Right ventricle myocardium superior (tissue), 1 donor: ENCODE measurements at regions of chr12 and their contacts with region 1.

Region 1: GRCh38 chr12:112031472-112031871 is 18.2 kb downstream of the ERP29 start:
- DNase-seq: no peak
- ATAC-seq: no peak

Region 2: DNA sequence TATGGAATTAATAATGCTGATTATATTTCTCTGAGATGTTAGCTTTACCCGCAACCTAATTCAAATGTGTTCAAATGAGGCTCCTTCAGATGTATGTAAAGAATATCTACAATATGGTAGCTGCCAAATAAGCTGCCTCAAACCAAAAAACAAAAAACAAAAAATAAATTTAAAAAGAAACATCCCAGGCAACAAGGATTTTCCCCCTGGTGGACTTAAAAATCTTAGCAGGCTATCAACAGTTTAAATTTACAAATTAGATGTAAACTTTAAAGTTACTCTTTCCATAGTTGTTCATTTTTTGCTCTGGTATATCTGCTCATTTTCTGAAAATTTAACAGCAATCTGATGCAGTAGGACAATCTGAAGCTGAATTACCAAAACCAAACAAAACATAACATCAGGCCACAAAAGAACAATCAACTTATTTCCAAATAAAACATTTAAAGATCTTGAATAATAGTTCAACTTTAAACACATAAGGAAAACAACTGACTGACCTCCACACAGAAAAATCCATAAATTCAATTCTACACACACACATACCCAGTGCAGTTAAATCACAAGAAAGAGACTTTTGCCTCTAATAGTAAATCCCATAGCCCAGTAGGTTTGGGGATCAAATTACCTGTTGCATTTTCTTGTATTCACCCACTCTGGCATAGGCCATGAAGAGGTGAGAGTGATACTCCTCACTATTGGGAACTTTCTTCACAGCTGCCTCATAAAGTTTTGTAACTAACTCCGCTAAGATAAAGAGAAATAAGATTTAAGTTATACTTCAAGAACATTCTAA is 55.8 kb after region 1 on chr12:
- intact Hi-C with region 1: loop called (anchors 10 kb)
- DNase-seq: no peak
- ATAC-seq: no peak